HepG2 (cell line): ENCODE measurements at regions of chr20 and their contacts with region 1.

Region 1: GRCh38 chr20:47559141-47559540 is 57.5 kb downstream of the NCOA3 start:
- DNase-seq: no peak
- ATAC-seq: no peak
- H3K4me3 ChIP-seq: no peak overlapping the region
- H3K27ac ChIP-seq: no peak overlapping the region
- H3K4me1 ChIP-seq: peaks cover 78% of the 10 kb centered on the region
- H3K27me3 ChIP-seq: no peaks in the 10 kb centered on the region
- CTCF ChIP-seq: no peak
- EP300 ChIP-seq: no peak
- POLR2A ChIP-seq: no peak
- RAD21 ChIP-seq: no peak

Region 2: GRCh38 chr20:47508278-47508677 is 50.9 kb before region 1 on chr20:
- CTCF ChIA-PET with region 1: no interaction called
- POLR2A ChIA-PET with region 1: no interaction called
- in situ Hi-C with region 1: no loop called
- intact Hi-C with region 1: loop called (anchors 5 kb)
- DNase-seq: no peak
- ATAC-seq: no peak
- H3K4me3 ChIP-seq: no peak overlapping the region
- H3K27ac ChIP-seq: peak overlapping the region; percentile 5
- H3K4me1 ChIP-seq: peaks cover 76% of the 10 kb centered on the region
- H3K27me3 ChIP-seq: no peaks in the 10 kb centered on the region
- CTCF ChIP-seq: no peak
- EP300 ChIP-seq: no peak
- POLR2A ChIP-seq: no peak
- RAD21 ChIP-seq: no peak